Psoas muscle (tissue), 8 donors: ENCODE measurements at regions of chr15 and their contacts with region 1.

Region 1: DNA sequence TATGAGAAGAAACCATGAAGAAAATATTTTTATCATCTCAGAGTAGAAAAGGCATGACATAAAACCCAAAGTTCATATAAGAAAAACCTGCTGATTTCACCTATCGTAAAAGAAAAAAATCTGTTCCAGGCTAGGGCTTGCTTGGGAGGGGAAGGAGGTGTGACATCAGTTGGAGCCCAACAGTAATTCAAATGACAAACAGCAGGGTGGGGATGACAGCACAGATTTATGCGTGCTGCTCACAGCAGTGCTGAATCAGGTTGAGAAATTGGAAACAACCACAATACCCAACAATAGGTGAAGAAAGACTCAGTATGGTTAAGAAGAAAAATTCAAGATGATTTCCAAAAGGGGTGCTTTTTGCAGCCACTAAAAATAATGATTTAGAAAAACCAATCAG is 172.4 kb downstream of the PDE8A start:
- DNase-seq: no peak
- ATAC-seq: no peak
- H3K4me3 ChIP-seq: no peak overlapping the region
- H3K27ac ChIP-seq: no peak overlapping the region
- H3K4me1 ChIP-seq: no peaks in the 10 kb centered on the region
- H3K27me3 ChIP-seq: no peaks in the 10 kb centered on the region
- CTCF ChIP-seq: no peak

Region 2: GRCh38 chr15:84961114-84961452 is 193.0 kb before region 1 on chr15:
- intact Hi-C with region 1: loop called in 1 of 2 experiments (anchors 10 kb)
- DNase-seq: no peak
- ATAC-seq: no peak
- H3K4me3 ChIP-seq: no peak overlapping the region
- H3K27ac ChIP-seq: no peak overlapping the region
- H3K4me1 ChIP-seq: no peaks in the 10 kb centered on the region
- H3K27me3 ChIP-seq: no peaks in the 10 kb centered on the region
- CTCF ChIP-seq: no peak

Region 3: DNA sequence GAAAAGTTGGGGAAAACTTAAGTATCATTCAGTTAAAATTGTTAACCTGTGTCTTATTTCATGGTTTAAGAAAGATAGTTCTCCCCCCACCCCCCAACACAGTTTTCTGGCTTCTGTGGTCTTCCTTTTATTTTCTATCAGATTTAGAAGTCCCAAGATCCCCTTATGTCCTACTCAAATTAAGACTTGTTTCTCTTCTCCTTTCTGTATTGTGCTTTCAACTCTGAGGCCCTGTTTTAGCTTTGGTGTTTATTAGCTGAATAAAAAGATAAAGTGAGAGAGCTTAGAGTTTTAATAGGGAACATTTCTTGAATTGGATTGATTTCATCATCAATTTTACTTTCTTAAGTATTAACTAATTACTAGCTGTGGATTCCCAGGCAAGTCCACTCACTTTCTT is 289.0 kb after region 1 on chr15:
- intact Hi-C with region 1: no loop called
- DNase-seq: no peak
- ATAC-seq: no peak
- H3K4me3 ChIP-seq: no peak overlapping the region
- H3K27ac ChIP-seq: no peak overlapping the region
- H3K4me1 ChIP-seq: peaks cover 20% of the 10 kb centered on the region
- H3K27me3 ChIP-seq: no peaks in the 10 kb centered on the region
- CTCF ChIP-seq: no peak